CD4-positive, alpha-beta memory T cell (primary cell): ENCODE measurements at regions of chr6 and their contacts with region 1.

Region 1: DNA sequence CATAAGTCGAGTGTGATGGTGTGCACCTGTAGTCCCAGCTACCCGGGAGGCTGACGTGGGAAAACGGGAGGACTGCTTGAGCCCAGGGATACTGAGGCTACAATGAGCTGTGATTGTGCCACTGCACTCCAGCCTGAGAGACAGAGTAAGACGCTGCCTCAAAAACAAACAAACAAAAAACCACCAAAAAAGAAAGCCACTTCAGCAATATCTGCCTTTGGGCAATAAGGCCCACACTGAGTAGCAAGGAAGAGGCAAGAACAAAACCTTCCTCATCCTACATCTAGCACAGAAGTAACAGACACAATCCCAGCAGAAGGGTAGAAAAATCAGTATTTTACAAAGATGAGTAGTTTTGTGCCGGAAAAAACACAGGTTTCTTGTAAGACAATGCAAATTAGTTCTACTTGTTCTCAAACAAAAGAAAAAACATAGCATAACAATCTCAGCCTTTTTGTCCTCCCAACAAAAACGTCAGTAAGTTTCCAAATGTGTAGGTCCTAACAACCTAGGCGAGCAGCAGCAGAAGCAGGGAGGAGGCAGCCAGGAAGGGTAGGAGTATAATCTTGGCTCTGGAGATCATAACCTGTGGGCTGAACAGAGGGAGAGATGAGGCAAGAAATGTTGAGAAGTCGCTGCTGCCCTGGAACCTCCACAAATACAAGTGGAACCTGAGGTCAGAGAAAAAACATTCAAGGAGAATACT is 5.7 kb downstream of the PPP1R10 start:
- DNase-seq: no peak
- H3K4me3 ChIP-seq: no peak overlapping the region
- H3K4me3 Mint-ChIP-seq: peak overlapping the region in 2 of 8 donors; percentile 23 to 33
- H3K27ac ChIP-seq: peak overlapping the region; percentile 32
- H3K27ac Mint-ChIP-seq: peak overlapping the region; percentile 77 to 100 (median 85)
- H3K4me1 ChIP-seq: peaks cover 70% of the 10 kb centered on the region
- H3K4me1 Mint-ChIP-seq: peaks cover 50 to 78% (median 63%) of the 10 kb centered on the region in 4 donors
- H3K27me3 ChIP-seq: no peaks in the 10 kb centered on the region
- H3K27me3 Mint-ChIP-seq: no peaks in the 10 kb centered on the region

Region 2: DNA sequence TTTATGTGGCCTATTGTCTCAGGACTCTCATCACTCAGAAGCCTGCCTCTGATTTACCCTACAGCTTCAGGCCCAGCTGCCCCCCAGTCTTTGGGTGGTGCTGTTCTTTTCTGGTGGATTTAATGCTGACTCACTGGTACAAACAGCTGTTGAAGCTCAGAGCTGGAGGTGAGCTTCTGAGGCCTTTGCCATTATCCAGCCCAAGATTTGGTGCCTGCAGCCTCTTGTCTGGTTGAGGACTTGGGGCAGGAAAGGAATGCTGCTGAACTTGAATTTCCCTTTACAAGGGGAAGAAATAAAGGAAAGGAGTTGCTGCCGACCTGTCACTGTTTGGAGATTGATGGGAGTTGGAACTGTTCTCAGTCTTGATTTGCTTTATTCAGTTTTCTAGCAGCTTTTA is 20.3 kb before region 1 on chr6:
- CTCF ChIA-PET with region 1: interaction called, 30 read pairs
- POLR2A ChIA-PET with region 1: interaction called, 132 read pairs
- intact Hi-C with region 1: no loop called
- DNase-seq: no peak
- H3K4me3 ChIP-seq: no peak overlapping the region
- H3K4me3 Mint-ChIP-seq: no peak overlapping the region
- H3K27ac ChIP-seq: no peak overlapping the region
- H3K27ac Mint-ChIP-seq: peak overlapping the region in 3 of 7 donors; percentile 30 to 86 (median 48)
- H3K4me1 ChIP-seq: no peaks in the 10 kb centered on the region
- H3K4me1 Mint-ChIP-seq: peaks cover 0 to 7% (median 4%) of the 10 kb centered on the region in 4 donors
- H3K27me3 ChIP-seq: no peaks in the 10 kb centered on the region
- H3K27me3 Mint-ChIP-seq: no peaks in the 10 kb centered on the region

Region 3: GRCh38 chr6:30600451-30600961 is 10.8 kb before region 1 on chr6:
- CTCF ChIA-PET with region 1: interaction called, 30 read pairs
- POLR2A ChIA-PET with region 1: interaction called, 132 read pairs
- intact Hi-C with region 1: no loop called
- DNase-seq: no peak
- H3K4me3 ChIP-seq: no peak overlapping the region
- H3K4me3 Mint-ChIP-seq: no peak overlapping the region
- H3K27ac ChIP-seq: no peak overlapping the region
- H3K27ac Mint-ChIP-seq: peak overlapping the region in 2 of 7 donors; percentile 41 to 64
- H3K4me1 ChIP-seq: no peaks in the 10 kb centered on the region
- H3K4me1 Mint-ChIP-seq: peaks cover 7 to 26% (median 17%) of the 10 kb centered on the region in 4 donors
- H3K27me3 ChIP-seq: no peaks in the 10 kb centered on the region
- H3K27me3 Mint-ChIP-seq: no peaks in the 10 kb centered on the region

Region 4: GRCh38 chr6:30960907-30961673 is 349.8 kb after region 1 on chr6:
- CTCF ChIA-PET with region 1: no interaction called
- POLR2A ChIA-PET with region 1: no interaction called
- intact Hi-C with region 1: no loop called
- DNase-seq: no peak
- H3K4me3 ChIP-seq: no peak overlapping the region
- H3K4me3 Mint-ChIP-seq: no peak overlapping the region
- H3K27ac ChIP-seq: no peak overlapping the region
- H3K27ac Mint-ChIP-seq: peak overlapping the region in 1 of 7 donors; percentile 28
- H3K4me1 ChIP-seq: peaks cover 18% of the 10 kb centered on the region
- H3K4me1 Mint-ChIP-seq: peaks cover 13 to 24% (median 21%) of the 10 kb centered on the region in 4 donors
- H3K27me3 ChIP-seq: no peaks in the 10 kb centered on the region
- H3K27me3 Mint-ChIP-seq: peaks cover 12 to 16% of the 10 kb centered on the region in 2 donors